ENCODE measurements at regions of chr5 and their contacts with region 1.

Region 1: GRCh38 chr5:63233911-63234310 is 655.3 kb downstream of the LRRC70 start:
- DNase-seq: no peak
- H3K4me3 ChIP-seq: no peak overlapping the region
- H3K4me3 Mint-ChIP-seq: peak overlapping the region; percentile 49
- H3K27ac Mint-ChIP-seq: peak overlapping the region; percentile 35
- H3K4me1 ChIP-seq: peaks cover 15% of the 10 kb centered on the region
- H3K4me1 Mint-ChIP-seq: peaks cover 21% of the 10 kb centered on the region
- H3K27me3 ChIP-seq: no peaks in the 10 kb centered on the region
- H3K27me3 Mint-ChIP-seq: no peaks in the 10 kb centered on the region
- CTCF ChIP-seq: no peak

Region 2: DNA sequence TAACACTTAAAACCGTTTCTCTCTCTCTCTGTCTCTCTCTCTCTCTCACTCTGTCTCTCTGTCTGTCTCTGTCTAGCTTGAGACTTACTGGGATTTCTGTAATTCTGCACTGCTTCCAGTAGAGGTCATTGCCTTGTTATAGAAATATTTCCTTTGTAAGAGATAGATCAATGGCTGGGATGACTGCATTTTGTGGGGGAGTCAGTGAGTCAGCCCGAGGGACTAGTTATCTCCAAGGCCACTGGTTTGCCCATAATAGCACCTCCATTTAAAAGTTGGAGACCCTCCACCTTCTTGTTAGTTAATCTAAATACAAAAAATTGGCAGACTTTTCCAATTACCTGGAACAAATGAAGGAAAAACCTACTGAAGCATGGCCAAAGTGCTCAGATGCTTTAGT is 108.0 kb before region 1 on chr5:
- CTCF ChIA-PET with region 1: no interaction called
- POLR2A ChIA-PET with region 1: no interaction called
- intact Hi-C with region 1: loop called (anchors 5 kb)
- DNase-seq: peak; percentile 26 to 31
- H3K4me3 ChIP-seq: no peak overlapping the region
- H3K4me3 Mint-ChIP-seq: no peak overlapping the region
- H3K27ac Mint-ChIP-seq: no peak overlapping the region
- H3K4me1 ChIP-seq: no peaks in the 10 kb centered on the region
- H3K4me1 Mint-ChIP-seq: peaks cover 7% of the 10 kb centered on the region
- H3K27me3 ChIP-seq: no peaks in the 10 kb centered on the region
- H3K27me3 Mint-ChIP-seq: no peaks in the 10 kb centered on the region
- CTCF ChIP-seq: peak; percentile 63